ENCODE measurements at regions of chr1 and their contacts with region 1.

Region 1: GRCh38 chr1:2429780-2430591 is 17.6 kb upstream of the PEX10 start:
- DNase-seq: no peak
- ATAC-seq: no peak
- H3K4me3 ChIP-seq: no peak overlapping the region
- H3K27ac ChIP-seq: no peak overlapping the region
- H3K4me1 ChIP-seq: no peaks in the 10 kb centered on the region
- H3K27me3 ChIP-seq: no peaks in the 10 kb centered on the region
- CTCF ChIP-seq: peak in 3 of 4 donors; percentile 8 to 28 (median 22)
- POLR2A ChIP-seq: no peak

Region 2: DNA sequence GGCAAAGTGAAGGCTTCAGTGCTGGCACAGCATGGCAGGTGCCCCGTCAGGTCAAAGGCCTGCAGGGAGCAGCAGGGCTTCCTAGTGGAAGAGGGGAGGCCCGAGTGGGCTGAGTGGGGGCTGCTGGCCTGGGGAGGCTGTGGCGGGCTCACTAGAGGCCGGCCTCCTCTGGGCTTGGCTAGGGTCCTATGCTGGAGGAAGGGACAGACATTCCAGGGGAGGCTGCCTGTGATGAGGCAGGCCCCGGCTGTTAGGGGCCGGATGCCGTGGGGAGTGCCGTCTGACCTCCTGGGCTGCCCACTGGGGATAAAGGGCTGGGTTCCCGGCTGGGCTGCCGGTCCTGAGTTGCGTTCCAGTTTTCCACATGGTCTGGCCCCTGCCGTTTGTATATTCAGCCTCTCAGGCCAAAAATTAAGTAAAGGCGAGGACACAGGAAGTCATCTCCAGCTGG is 177.7 kb after region 1 on chr1:
- intact Hi-C with region 1: loop called in 1 of 2 experiments (anchors 10 kb)
- DNase-seq: peak in 1 of 3 donors; percentile 38
- ATAC-seq: peak in 2 of 4 donors; percentile 23 to 28
- H3K4me3 ChIP-seq: no peak overlapping the region
- H3K27ac ChIP-seq: no peak overlapping the region
- H3K4me1 ChIP-seq: no peaks in the 10 kb centered on the region
- H3K27me3 ChIP-seq: no peaks in the 10 kb centered on the region
- CTCF ChIP-seq: no peak
- POLR2A ChIP-seq: no peak